ENCODE measurements at regions of chr7 and their contacts with region 1.

Region 1: DNA sequence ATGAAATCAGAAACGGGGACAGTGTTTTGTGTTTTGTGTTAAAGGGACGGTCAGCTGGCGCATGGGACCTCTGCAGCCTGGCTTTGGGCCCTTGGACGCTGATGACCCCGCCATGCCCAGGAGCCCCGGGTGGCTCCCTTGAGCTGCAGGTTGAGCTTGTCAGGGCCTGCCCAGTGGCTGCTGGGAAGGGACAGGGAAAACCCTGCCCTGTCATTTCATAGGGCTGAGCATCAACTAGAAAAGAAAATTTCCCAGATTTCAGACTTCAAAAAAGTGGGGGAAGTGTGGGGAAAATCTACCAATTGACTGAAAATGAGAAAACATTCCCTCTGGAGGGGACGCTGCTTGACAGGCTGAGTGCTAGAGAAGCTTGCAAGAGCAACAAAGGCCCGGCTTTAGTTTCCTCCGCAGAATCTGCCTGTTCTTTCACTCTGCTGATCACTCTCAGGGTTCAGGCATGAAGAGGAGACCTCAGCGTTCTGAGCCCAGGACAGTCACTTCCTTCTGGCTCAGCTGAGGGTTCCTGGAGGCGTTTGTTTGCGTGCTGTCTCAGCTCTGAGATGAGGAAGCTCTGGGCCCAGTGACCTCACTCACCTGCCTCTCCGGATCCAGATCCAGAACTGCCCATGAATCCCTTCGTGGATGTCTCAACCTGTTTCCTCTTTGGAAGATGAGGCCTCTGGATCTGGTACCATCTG is 18.6 kb upstream of the DNAJB6 start:
- DNase-seq: no peak
- ATAC-seq: peak; percentile 61 to 68; a peak in 4 of 6 replicates
- H3K4me3 ChIP-seq: no peak overlapping the region
- H3K27ac ChIP-seq: peak overlapping the region; percentile 11 to 72; a peak in 3 of 6 replicates
- H3K4me1 ChIP-seq: peaks cover 14% of the 10 kb centered on the region
- CTCF ChIP-seq: no peak
- EP300 ChIP-seq: no peak
- POLR2A ChIP-seq: no peak
- RAD21 ChIP-seq: no peak

Region 2: GRCh38 chr7:157239571-157240270 is 78.4 kb before region 1 on chr7:
- CTCF ChIA-PET with region 1: no interaction called
- POLR2A ChIA-PET with region 1: no interaction called
- DNase-seq: no peak
- ATAC-seq: no peak
- H3K4me3 ChIP-seq: no peak overlapping the region
- H3K27ac ChIP-seq: no peak overlapping the region
- H3K4me1 ChIP-seq: peaks cover 8% of the 10 kb centered on the region; the same call in 1 of the 3 replicates
- CTCF ChIP-seq: no peak
- EP300 ChIP-seq: no peak
- POLR2A ChIP-seq: no peak
- RAD21 ChIP-seq: no peak

Region 3: GRCh38 chr7:157329447-157329846 is 11.3 kb after region 1 on chr7:
- CTCF ChIA-PET with region 1: interaction called, 16 read pairs
- POLR2A ChIA-PET with region 1: interaction called, 4 read pairs
- DNase-seq: no peak
- ATAC-seq: peak; percentile 17 to 62; a peak in 3 of 6 replicates
- H3K4me3 ChIP-seq: no peak overlapping the region
- H3K27ac ChIP-seq: no peak overlapping the region
- H3K4me1 ChIP-seq: no peaks in the 10 kb centered on the region
- CTCF ChIP-seq: no peak
- EP300 ChIP-seq: no peak
- POLR2A ChIP-seq: no peak
- RAD21 ChIP-seq: no peak

Measured in A549 (cell line).